ENCODE measurements at regions of chr1 and their contacts with region 1.

Region 1: DNA sequence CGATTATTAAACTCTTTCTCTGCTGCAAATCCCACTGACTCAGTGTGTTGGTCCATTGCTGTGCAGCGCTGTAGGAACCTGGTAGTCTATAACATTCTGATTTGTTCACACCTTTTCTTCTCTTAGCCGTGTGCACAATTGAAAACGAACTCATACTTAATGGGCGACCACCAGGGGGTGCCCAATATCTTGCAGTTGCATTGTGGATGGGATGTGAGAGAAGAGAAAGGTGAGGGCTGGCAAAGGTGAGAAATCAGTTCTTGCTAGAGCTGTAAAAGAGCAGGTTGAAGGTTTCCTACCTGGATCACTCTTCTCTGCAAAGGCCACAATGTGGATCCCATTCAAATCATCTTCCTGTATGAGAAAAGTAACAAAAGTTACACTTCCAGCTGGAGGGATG is 51.0 kb downstream of the CASQ2 start:
- DNase-seq: no peak
- H3K4me3 Mint-ChIP-seq: no peak overlapping the region
- H3K27ac Mint-ChIP-seq: no peak overlapping the region
- H3K4me1 Mint-ChIP-seq: no peaks in the 10 kb centered on the region
- H3K27me3 Mint-ChIP-seq: peaks cover 2% of the 10 kb centered on the region

Region 2: GRCh38 chr1:115980998-115981993 is 263.8 kb after region 1 on chr1:
- intact Hi-C with region 1: loop called (anchors 2 kb)
- DNase-seq: no peak
- H3K4me3 Mint-ChIP-seq: no peak overlapping the region
- H3K27ac Mint-ChIP-seq: no peak overlapping the region
- H3K4me1 Mint-ChIP-seq: no peaks in the 10 kb centered on the region
- H3K27me3 Mint-ChIP-seq: peaks cover 30% of the 10 kb centered on the region

Region 3: DNA sequence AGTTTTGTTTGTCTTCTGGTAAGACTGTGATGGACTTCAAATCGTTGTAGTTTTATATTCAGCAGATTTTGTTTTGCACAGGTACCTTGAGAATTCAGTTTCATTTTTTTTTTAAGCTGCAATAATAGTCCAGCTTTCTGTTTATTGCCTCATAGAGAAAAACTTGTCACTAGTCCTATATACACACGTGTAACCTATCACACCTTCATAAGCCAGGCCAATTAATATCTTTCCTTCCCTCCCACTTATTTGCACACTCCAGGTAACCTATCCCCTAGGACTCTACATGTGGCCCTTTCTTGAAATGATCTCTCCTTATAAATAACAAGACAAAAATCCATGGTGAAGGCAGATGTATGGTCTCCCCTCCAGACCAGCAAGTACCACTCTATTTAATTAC is 321.1 kb after region 1 on chr1:
- intact Hi-C with region 1: no loop called
- DNase-seq: no peak
- H3K4me3 Mint-ChIP-seq: no peak overlapping the region
- H3K27ac Mint-ChIP-seq: no peak overlapping the region
- H3K4me1 Mint-ChIP-seq: no peaks in the 10 kb centered on the region
- H3K27me3 Mint-ChIP-seq: peaks cover 10% of the 10 kb centered on the region

Measured in activated T-helper 1 cell treated with anti-CD3 and anti-CD28 coated beads, Interleukin-12 subunit alpha, Interleukin-12 subunit beta, Interleukin-2, Interleukin-4 antibody, amounts not matched to agents 30 ng/mL and 10 ng/mL and 1 ng/mL, durations not matched to agents 14 hours and 24 hours and 36 hours (primary cell).